Common myeloid progenitor, CD34-positive (primary cell): ENCODE measurements at regions of chr12 and their contacts with region 1.

Region 1: GRCh38 chr12:122895705-122896636 is at the start of gene VPS37B:
- DNase-seq: peak; percentile 93 to 96 (median 95)
- H3K4me3 ChIP-seq: peak within 1 kb of the TSS; percentile 90 to 99 (median 96)
- H3K27ac ChIP-seq: peak within 1 kb of the TSS; percentile 98 to 99
- H3K4me1 ChIP-seq: peaks cover 33 to 79% (median 66%) of the 10 kb centered on the region in 4 experiments
- H3K27me3 ChIP-seq: no peaks in the 10 kb centered on the region

Region 2: GRCh38 chr12:122871851-122872780 is 23.9 kb before region 1 on chr12:
- CTCF ChIA-PET with region 1: interaction called, 149 read pairs
- POLR2A ChIA-PET with region 1: interaction called, 4 read pairs
- DNase-seq: peak; percentile 57 to 88 (median 84)
- H3K4me3 ChIP-seq: peak overlapping the region in 6 of 7 experiments; percentile 41 to 75 (median 63)
- H3K27ac ChIP-seq: peak overlapping the region; percentile 37 to 80
- H3K4me1 ChIP-seq: peaks cover 18 to 63% (median 56%) of the 10 kb centered on the region in 4 experiments
- H3K27me3 ChIP-seq: no peaks in the 10 kb centered on the region

Region 3: DNA sequence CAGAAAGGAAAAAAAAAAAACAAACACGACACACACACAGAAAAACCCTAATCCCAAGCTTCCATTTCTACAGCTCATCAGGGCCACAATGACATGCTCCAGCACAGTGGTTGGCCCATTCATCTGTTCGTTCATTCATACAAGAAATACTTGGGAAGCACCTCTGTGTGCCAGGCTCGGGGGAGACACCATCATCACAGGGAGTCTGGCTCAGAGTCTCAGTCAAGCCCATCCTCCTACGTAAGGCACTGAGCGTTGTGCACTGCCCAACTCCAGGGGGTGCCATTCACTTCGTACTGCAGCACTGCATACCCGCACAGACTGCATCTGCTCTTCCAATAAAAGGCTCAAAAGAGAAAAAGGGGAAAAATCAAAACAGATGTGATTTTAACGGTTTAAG is 15.3 kb before region 1 on chr12:
- CTCF ChIA-PET with region 1: interaction called, 149 read pairs
- POLR2A ChIA-PET with region 1: interaction called, 9 read pairs
- DNase-seq: peak; percentile 64 to 72 (median 72)
- H3K4me3 ChIP-seq: peak overlapping the region in 2 of 7 experiments; percentile 9 to 43
- H3K27ac ChIP-seq: peak overlapping the region; percentile 97
- H3K4me1 ChIP-seq: peaks cover 33 to 96% (median 78%) of the 10 kb centered on the region in 4 experiments
- H3K27me3 ChIP-seq: no peaks in the 10 kb centered on the region

Region 4: GRCh38 chr12:122946690-122947341 is 50.8 kb after region 1 on chr12:
- CTCF ChIA-PET with region 1: interaction called, 40 read pairs
- POLR2A ChIA-PET with region 1: interaction called, 9 read pairs
- DNase-seq: peak; percentile 98 to 99 (median 99)
- H3K4me3 ChIP-seq: peak overlapping the region in 3 of 7 experiments; percentile 2 to 38 (median 37)
- H3K27ac ChIP-seq: peak overlapping the region; percentile 72 to 82
- H3K4me1 ChIP-seq: peaks cover 0 to 36% (median 34%) of the 10 kb centered on the region in 4 experiments
- H3K27me3 ChIP-seq: no peaks in the 10 kb centered on the region